Naive thymus-derived CD4-positive, alpha-beta T cell (primary cell): ENCODE measurements at regions of chr3 and their contacts with region 1.

Region 1: DNA sequence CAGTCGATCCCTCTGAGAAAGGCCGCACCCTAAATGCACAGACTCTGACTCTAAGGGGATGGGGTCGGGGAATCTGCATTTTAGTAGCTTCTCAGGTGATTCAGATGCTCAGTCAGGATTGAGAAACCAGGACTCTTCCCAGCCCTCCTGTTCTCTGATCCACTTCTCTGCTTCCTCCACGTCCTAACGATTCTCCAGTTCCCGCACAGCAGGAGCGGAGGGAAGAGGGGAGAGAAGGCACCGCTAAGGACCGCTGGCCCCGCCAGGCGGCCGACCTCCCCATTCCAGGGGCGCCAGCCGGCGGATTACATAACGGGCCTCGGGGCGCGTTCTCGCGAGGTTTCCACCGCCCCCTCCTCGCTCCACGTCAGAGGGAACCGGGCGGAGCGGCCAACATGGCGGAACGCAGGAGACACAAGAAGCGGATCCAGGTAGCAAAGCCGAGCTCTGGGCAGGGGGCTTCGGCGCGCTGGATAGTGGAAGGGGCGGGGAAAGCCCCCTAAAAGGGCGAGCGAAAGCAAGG is at the start of gene SEC62:
- DNase-seq: peak; percentile 92 to 97 (median 96)
- ATAC-seq: peak; percentile 95
- H3K4me3 ChIP-seq: peak within 1 kb of the TSS; percentile 80
- H3K4me3 Mint-ChIP-seq: peak within 1 kb of the TSS; percentile 83 to 98 (median 96)
- H3K27ac ChIP-seq: peak within 1 kb of the TSS; percentile 95
- H3K27ac Mint-ChIP-seq: peak within 1 kb of the TSS; percentile 95 to 99 (median 99)
- H3K4me1 ChIP-seq: peaks cover 22 to 36% of the 10 kb centered on the region in 2 donors
- H3K4me1 Mint-ChIP-seq: peaks cover 37 to 81% (median 69%) of the 10 kb centered on the region in 7 donors
- H3K27me3 ChIP-seq: no peaks in the 10 kb centered on the region
- H3K27me3 Mint-ChIP-seq: peaks cover 0 to 2% (median 0%) of the 10 kb centered on the region in 5 donors
- total RNA-seq, gene SEC62: 75.2 to 156 (median 110) TPM

Region 2: GRCh38 chr3:169764452-169765274 is 201.8 kb before region 1 on chr3 and contains the start of gene TERC:
- CTCF ChIA-PET with region 1: interaction called, 4 read pairs
- POLR2A ChIA-PET with region 1: interaction called, 28 read pairs
- intact Hi-C with region 1: loop called (anchors 1 kb)
- DNase-seq: peak; percentile 72 to 96 (median 94)
- ATAC-seq: peak; percentile 91
- H3K4me3 ChIP-seq: peak within 1 kb of the TSS; percentile 88
- H3K4me3 Mint-ChIP-seq: peak within 1 kb of the TSS; percentile 89 to 99 (median 98)
- H3K27ac ChIP-seq: peak within 1 kb of the TSS; percentile 98
- H3K27ac Mint-ChIP-seq: peak within 1 kb of the TSS; percentile 96 to 100 (median 99)
- H3K4me1 ChIP-seq: peaks cover 11 to 18% of the 10 kb centered on the region in 2 donors
- H3K4me1 Mint-ChIP-seq: peaks cover 6 to 39% (median 33%) of the 10 kb centered on the region in 7 donors
- H3K27me3 ChIP-seq: no peaks in the 10 kb centered on the region
- H3K27me3 Mint-ChIP-seq: no peaks in the 10 kb centered on the region
- total RNA-seq, gene TERC: 4.0 to 19.4 (median 7.4) TPM

Region 3: GRCh38 chr3:169871129-169871886 is 95.2 kb before region 1 on chr3:
- CTCF ChIA-PET with region 1: interaction called, 5 read pairs
- POLR2A ChIA-PET with region 1: interaction called, 55 read pairs
- intact Hi-C with region 1: no loop called
- DNase-seq: peak in 7 of 9 donors; percentile 8 to 59 (median 42)
- ATAC-seq: no peak
- H3K4me3 ChIP-seq: no peak overlapping the region
- H3K4me3 Mint-ChIP-seq: peak overlapping the region; percentile 38 to 78 (median 62)
- H3K27ac ChIP-seq: no peak overlapping the region
- H3K27ac Mint-ChIP-seq: peak overlapping the region; percentile 9 to 84 (median 65)
- H3K4me1 ChIP-seq: peaks cover 0 to 18% of the 10 kb centered on the region in 2 donors
- H3K4me1 Mint-ChIP-seq: peaks cover 14 to 46% (median 27%) of the 10 kb centered on the region in 7 donors
- H3K27me3 ChIP-seq: no peaks in the 10 kb centered on the region
- H3K27me3 Mint-ChIP-seq: peaks cover 0 to 2% (median 0%) of the 10 kb centered on the region in 5 donors

Region 4: DNA sequence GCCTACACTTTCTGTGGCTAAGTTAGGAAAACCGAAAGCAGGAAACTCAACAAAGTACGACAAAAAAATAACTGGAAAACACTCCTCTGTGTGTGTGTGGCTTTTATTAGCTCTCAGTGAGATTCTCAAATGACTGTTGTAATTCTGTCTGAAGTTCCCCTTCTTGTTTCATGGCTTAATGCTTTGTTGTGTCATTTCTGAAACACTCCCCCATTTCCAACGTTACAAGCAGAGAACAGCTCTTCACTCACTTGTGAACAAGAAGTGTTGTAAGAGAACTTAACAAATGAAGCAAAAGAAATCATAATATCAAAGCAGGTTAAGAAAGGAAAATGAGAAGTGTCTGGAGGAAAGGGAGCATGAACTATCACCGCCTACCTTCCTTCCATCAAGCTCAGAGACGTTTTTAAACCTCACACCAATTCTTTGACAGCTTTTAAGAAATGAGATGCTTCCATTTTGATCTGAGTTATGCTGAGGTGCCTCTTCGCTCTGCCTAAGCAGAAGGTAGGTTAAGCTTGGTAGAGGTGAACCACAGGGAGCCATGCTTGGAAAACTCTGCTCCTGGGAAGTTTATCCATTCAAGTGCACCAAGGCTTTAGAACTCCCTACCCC is 12.2 kb before region 1 on chr3:
- CTCF ChIA-PET with region 1: interaction called, 3 read pairs
- POLR2A ChIA-PET with region 1: interaction called, 36 read pairs
- intact Hi-C with region 1: no loop called
- DNase-seq: no peak
- ATAC-seq: peak; percentile 69
- H3K4me3 ChIP-seq: no peak overlapping the region
- H3K4me3 Mint-ChIP-seq: no peak overlapping the region
- H3K27ac ChIP-seq: no peak overlapping the region
- H3K27ac Mint-ChIP-seq: no peak overlapping the region
- H3K4me1 ChIP-seq: no peaks in the 10 kb centered on the region
- H3K4me1 Mint-ChIP-seq: peaks cover 0 to 3% (median 0%) of the 10 kb centered on the region in 7 donors
- H3K27me3 ChIP-seq: no peaks in the 10 kb centered on the region
- H3K27me3 Mint-ChIP-seq: peaks cover 0 to 13% (median 7%) of the 10 kb centered on the region in 5 donors

Region 5: DNA sequence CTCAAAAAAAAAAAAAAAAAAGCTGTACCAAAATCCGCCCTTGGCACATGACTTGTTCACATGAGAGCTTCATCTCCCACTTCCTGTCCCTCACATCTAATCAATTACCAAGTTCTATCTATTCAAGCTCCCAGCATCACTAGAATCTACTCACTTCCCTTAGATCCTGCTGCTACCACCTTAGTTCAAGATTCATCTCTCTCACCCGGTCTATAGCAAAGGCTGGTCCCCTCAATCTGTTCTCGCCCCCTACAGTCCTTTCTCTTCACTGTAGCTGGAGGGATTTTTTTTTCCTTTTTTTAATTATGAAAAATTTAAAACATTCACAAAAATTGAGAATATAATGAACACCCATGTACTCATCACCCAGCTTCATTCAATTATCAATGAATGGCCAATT is 54.6 kb after region 1 on chr3:
- CTCF ChIA-PET with region 1: interaction called, 5 read pairs
- POLR2A ChIA-PET with region 1: interaction called, 17 read pairs
- intact Hi-C with region 1: no loop called
- DNase-seq: peak in 6 of 9 donors; percentile 21 to 48 (median 40)
- ATAC-seq: peak; percentile 61
- H3K4me3 ChIP-seq: no peak overlapping the region
- H3K4me3 Mint-ChIP-seq: peak overlapping the region in 7 of 10 donors; percentile 3 to 71 (median 42)
- H3K27ac ChIP-seq: no peak overlapping the region
- H3K27ac Mint-ChIP-seq: peak overlapping the region in 8 of 9 donors; percentile 18 to 92 (median 73)
- H3K4me1 ChIP-seq: peaks cover 0 to 9% of the 10 kb centered on the region in 2 donors
- H3K4me1 Mint-ChIP-seq: peaks cover 10 to 64% (median 30%) of the 10 kb centered on the region in 7 donors
- H3K27me3 ChIP-seq: no peaks in the 10 kb centered on the region
- H3K27me3 Mint-ChIP-seq: peaks cover 0 to 17% (median 0%) of the 10 kb centered on the region in 5 donors

Region 6: GRCh38 chr3:170205302-170205701 is 238.8 kb after region 1 on chr3:
- CTCF ChIA-PET with region 1: no interaction called
- POLR2A ChIA-PET with region 1: no interaction called
- intact Hi-C with region 1: no loop called
- DNase-seq: no peak
- ATAC-seq: no peak
- H3K4me3 ChIP-seq: no peak overlapping the region
- H3K4me3 Mint-ChIP-seq: no peak overlapping the region
- H3K27ac ChIP-seq: no peak overlapping the region
- H3K27ac Mint-ChIP-seq: no peak overlapping the region
- H3K4me1 ChIP-seq: no peaks in the 10 kb centered on the region
- H3K4me1 Mint-ChIP-seq: no peaks in the 10 kb centered on the region
- H3K27me3 ChIP-seq: peaks cover 0 to 6% of the 10 kb centered on the region in 2 donors
- H3K27me3 Mint-ChIP-seq: peaks cover 5 to 25% (median 18%) of the 10 kb centered on the region in 5 donors

Region 7: DNA sequence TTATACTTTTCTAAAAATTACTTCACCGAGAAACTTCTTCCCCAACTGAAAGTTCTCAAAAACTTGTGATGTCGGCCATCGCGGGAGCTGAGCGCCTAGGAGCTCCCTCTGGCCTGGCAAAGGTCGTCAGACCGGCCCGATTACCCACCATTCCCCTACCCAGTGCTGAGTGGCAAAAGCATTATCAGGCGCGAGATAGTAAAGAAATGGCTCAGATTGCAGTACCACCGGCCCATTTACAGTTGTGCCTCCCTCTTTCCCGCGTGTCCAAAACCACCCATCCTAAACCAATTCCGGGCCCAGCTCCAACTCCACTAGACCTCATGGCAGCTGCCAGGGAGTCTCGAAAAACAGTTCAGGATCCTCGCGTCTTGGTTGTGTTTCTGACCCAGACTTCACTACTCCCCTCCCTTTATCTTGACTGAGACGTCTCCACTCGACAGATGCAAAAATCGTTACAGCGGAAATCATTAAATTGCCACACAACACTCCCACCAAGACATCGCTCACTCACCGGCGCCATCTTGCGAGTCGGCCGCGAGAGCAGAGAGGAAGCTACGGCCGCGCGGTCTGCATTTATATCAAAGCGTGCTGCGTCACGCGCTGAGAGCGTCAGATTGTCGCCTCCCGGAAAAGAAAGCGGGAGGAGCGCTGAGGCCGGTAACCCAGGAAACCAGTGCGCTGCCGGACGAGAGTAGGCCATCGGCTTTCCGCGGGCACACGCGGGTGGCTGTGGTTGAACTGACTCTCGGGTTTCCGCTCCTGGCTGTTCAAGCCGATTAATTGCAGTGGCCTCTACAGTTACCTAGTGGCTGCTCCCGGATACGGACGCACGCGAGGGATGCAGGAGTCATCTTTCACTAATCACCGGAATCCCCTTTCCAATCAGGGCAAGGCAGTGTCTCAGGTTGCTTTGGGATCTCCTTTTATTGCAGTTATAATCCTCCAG is 903.4 kb after region 1 on chr3 and contains the start of gene RPL22L1:
- CTCF ChIA-PET with region 1: no interaction called
- POLR2A ChIA-PET with region 1: no interaction called
- intact Hi-C with region 1: loop called (anchors 5 kb)
- DNase-seq: peak; percentile 83 to 92 (median 90)
- ATAC-seq: peak; percentile 96
- H3K4me3 ChIP-seq: peak within 1 kb of the TSS; percentile 84
- H3K4me3 Mint-ChIP-seq: peak within 1 kb of the TSS; percentile 93 to 98 (median 94)
- H3K27ac ChIP-seq: peak within 1 kb of the TSS; percentile 86
- H3K27ac Mint-ChIP-seq: peak within 1 kb of the TSS; percentile 96 to 99 (median 98)
- H3K4me1 ChIP-seq: peaks cover 22% of the 10 kb centered on the region in 2 donors
- H3K4me1 Mint-ChIP-seq: peaks cover 10 to 41% (median 26%) of the 10 kb centered on the region in 7 donors
- H3K27me3 ChIP-seq: no peaks in the 10 kb centered on the region
- H3K27me3 Mint-ChIP-seq: peaks cover 0 to 4% (median 0%) of the 10 kb centered on the region in 5 donors
- total RNA-seq, gene RPL22L1: 27.5 to 62.6 (median 47.9) TPM